ENCODE measurements at regions of chr7 and their contacts with region 1.

Region 1: GRCh38 chr7:26365077-26365900 is 73.6 kb downstream of the SNX10 start:
- DNase-seq: no peak
- ATAC-seq: peak; percentile 93
- H3K4me3 ChIP-seq: no peak overlapping the region
- H3K27ac ChIP-seq: no peak overlapping the region
- H3K4me1 ChIP-seq: peaks cover 13% of the 10 kb centered on the region
- H3K27me3 ChIP-seq: peaks cover 1% of the 10 kb centered on the region
- CTCF ChIP-seq: peak; percentile 77

Region 2: GRCh38 chr7:25894902-25895791 is 470.1 kb before region 1 on chr7:
- intact Hi-C with region 1: loop called (anchors 5 kb)
- DNase-seq: peak; percentile 87
- ATAC-seq: peak; percentile 86
- H3K4me3 ChIP-seq: peak overlapping the region; percentile 0
- H3K27ac ChIP-seq: no peak overlapping the region
- H3K4me1 ChIP-seq: peaks cover 3% of the 10 kb centered on the region
- H3K27me3 ChIP-seq: peaks cover under 1% of the 10 kb centered on the region
- CTCF ChIP-seq: peak; percentile 76

Region 3: DNA sequence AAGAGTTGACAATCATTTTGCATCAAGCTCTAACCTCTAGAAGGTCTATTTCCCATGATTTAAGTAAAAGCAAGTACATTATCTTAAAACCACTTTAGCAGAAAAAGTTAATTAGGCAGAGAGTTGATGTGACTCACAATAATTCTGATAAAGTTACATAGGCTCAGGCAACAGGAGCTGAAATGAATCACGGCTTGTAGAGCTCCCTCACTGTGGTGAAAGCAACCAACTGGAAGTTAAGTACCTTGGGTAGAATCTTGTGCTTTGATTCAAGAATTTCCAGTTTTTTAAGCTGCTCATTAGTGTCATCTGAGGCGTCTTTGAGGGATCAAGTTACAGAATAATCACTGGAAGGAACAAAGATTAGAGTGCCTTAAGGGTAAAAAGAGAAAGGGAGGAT is 282.2 kb before region 1 on chr7:
- intact Hi-C with region 1: loop called (anchors 10 kb)
- DNase-seq: no peak
- ATAC-seq: no peak
- H3K4me3 ChIP-seq: no peak overlapping the region
- H3K27ac ChIP-seq: no peak overlapping the region
- H3K4me1 ChIP-seq: no peaks in the 10 kb centered on the region
- H3K27me3 ChIP-seq: no peaks in the 10 kb centered on the region
- CTCF ChIP-seq: no peak

Measured in upper lobe of right lung (tissue), 1 donor.